Posterior vena cava (tissue), 2 donors: ENCODE measurements at regions of chr2 and their contacts with region 1.

Region 1: DNA sequence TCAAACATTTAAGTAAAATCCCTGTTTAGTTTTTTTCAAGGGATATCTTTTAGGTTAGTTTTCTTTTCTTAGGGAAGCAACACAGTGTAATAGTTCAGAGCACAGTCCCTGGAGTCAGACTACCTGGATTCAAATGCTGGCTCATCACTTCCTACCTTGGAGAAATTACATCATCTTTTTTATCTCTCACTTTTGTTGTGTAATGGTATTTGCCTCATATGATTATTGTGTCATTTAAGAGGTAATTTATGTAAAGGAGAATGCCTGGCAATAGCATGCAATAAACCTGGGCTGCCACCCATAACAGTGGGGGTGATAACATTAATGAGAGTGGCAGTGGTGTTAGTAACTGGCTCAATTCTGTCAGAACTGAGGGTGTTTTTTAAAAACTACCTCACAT is 26.3 kb downstream of the ERLEC1 start:
- DNase-seq: no peak

Region 2: GRCh38 chr2:52144585-52144984 is 1668.6 kb before region 1 on chr2:
- intact Hi-C with region 1: loop called in 1 of 2 experiments (anchors 10 kb)
- DNase-seq: no peak

Region 3: DNA sequence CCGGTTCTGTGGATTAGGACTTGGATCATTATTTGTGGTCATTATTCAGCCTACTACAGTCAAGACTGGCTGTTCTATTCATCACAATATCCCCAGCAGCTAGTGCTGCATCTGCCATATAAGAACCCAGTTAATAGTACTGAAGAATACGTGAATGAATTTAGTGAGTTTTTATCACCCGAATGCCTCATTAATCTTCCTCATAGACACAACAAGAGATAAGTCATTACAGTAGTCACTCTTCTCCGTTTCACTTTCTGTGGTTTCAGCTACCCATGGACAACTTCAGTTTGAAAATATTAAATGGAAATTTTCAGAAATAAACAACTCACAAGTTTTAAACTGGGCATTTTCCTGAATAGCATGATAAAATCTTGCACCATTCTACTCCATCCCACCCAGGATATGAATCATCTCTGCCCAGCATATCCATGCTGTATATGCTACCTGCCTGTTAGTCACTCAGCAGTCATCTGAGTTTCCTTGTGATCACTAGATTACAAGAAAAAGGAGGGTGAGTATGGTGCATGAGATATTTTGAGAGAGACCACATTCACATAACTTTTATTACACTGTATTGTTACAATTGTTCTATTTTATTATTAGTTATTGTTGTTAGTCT is 409.2 kb before region 1 on chr2:
- intact Hi-C with region 1: no loop called
- DNase-seq: no peak

Region 4: DNA sequence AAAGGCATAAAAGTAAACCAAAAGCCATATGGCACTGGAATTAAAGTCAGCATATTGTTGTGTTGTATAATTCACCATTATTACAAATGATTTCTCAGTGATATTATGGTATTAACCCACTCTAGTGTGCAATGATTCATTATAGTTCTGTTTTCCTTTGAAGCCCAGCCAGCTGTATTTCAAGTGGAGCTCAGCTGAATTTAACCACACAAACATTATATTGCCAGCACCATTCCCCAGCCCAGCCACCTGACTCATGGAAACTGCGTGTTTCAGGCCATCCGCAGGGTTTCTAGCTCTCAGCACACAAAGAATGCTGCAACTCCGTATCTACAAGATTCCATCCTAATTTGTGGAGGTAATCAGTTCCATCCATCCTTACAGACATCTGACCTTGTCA is 212.3 kb before region 1 on chr2:
- intact Hi-C with region 1: no loop called
- DNase-seq: no peak

Region 5: DNA sequence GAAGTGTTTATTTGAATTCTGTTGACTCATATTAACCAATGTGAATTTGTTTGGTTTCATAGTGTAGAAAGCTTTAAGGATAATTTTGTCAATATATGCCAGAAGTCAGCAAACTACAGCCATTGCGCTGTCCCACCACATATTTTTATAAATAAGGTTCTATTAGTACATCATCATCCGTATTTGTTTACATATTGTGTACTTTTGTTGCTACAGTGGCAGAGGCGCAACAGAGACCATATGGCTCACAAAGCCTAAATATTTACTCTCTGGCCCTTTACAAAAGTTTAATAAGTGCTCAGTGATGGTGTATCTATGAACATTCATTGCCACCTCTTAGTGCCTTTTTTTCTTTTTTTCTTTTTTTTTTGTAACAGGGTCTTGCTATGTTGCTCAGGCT is 19.9 kb before region 1 on chr2:
- intact Hi-C with region 1: no loop called
- DNase-seq: no peak

Region 6: DNA sequence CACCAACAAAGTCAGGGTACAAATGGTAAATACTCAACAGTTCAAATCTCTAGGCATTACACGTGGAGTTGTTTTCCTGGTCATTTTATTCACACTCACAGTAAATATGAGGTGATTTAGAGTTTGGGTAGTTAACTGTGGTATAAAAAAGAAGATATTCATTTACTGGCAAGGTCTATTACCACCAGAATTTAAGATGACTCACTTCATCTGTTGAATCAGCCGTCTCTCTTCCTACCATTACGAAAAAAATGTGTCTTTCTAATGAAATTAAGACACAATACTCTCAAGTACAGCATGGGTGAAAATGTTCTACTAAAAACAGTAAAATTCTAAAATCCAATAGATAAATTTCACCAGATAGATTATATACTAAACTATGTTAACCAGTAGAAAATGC is 67.6 kb after region 1 on chr2:
- intact Hi-C with region 1: loop called in 1 of 2 experiments (anchors 2 kb)
- DNase-seq: no peak